CD8-positive, alpha-beta T cell (primary cell): ENCODE measurements at regions of chr5 and their contacts with region 1.

Region 1: GRCh38 chr5:180860887-180861822 is at the start of gene ZFP62:
- DNase-seq: peak; percentile 81 to 94 (median 86)
- ATAC-seq: peak; percentile 71
- H3K4me3 ChIP-seq: peak within 1 kb of the TSS; percentile 79 to 86
- H3K4me3 Mint-ChIP-seq: peak within 1 kb of the TSS; percentile 94
- H3K27ac ChIP-seq: peak within 1 kb of the TSS; percentile 65 to 85
- H3K27ac Mint-ChIP-seq: peak within 1 kb of the TSS; percentile 96
- H3K4me1 ChIP-seq: no peaks in the 10 kb centered on the region
- H3K4me1 Mint-ChIP-seq: peaks cover 29% of the 10 kb centered on the region
- H3K27me3 ChIP-seq: no peaks in the 10 kb centered on the region
- H3K27me3 Mint-ChIP-seq: no peaks in the 10 kb centered on the region
- CTCF ChIP-seq: peak; percentile 8
- total RNA-seq, gene ZFP62: 13.7 to 13.9 TPM

Region 2: GRCh38 chr5:180259260-180259681 is 601.9 kb before region 1 on chr5:
- CTCF ChIA-PET with region 1: no interaction called
- POLR2A ChIA-PET with region 1: no interaction called
- intact Hi-C with region 1: no loop called
- DNase-seq: no peak
- ATAC-seq: no peak
- H3K4me3 ChIP-seq: no peak overlapping the region
- H3K4me3 Mint-ChIP-seq: no peak overlapping the region
- H3K27ac ChIP-seq: no peak overlapping the region
- H3K27ac Mint-ChIP-seq: no peak overlapping the region
- H3K4me1 ChIP-seq: no peaks in the 10 kb centered on the region
- H3K4me1 Mint-ChIP-seq: no peaks in the 10 kb centered on the region
- H3K27me3 ChIP-seq: no peaks in the 10 kb centered on the region
- H3K27me3 Mint-ChIP-seq: no peaks in the 10 kb centered on the region
- CTCF ChIP-seq: no peak

Region 3: DNA sequence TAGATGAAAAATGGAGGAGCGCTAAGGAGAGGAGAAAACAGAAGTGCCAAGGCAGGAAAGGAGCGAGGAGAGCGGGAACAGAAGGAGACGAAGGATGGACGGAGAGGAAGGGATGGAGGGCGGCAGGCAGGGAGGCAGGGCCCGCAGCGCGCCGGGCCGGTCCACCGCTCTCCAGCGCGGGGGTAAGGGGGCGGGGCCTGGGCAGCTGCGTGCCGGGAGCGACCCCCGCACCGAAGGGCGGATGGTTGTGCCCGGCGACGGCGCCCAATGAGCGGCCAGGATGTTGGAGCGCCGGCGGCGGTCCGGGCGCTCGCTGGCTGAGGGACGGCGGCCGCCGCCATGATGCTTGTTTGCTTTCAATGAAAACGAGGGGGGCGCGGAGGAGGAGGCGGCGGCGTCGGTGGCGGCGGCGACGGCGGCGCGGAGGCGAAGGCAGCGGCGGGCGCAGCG is 367.1 kb before region 1 on chr5 and contains the start of gene CNOT6:
- CTCF ChIA-PET with region 1: no interaction called
- POLR2A ChIA-PET with region 1: no interaction called
- intact Hi-C with region 1: loop called (anchors 5 to 10 kb)
- DNase-seq: peak; percentile 90 to 98 (median 95)
- ATAC-seq: peak; percentile 91
- H3K4me3 ChIP-seq: peak within 1 kb of the TSS; percentile 64
- H3K4me3 Mint-ChIP-seq: peak within 1 kb of the TSS; percentile 98
- H3K27ac ChIP-seq: peak within 1 kb of the TSS; percentile 80 to 88
- H3K27ac Mint-ChIP-seq: peak within 1 kb of the TSS; percentile 99
- H3K4me1 ChIP-seq: peaks cover 16% of the 10 kb centered on the region
- H3K4me1 Mint-ChIP-seq: peaks cover 40% of the 10 kb centered on the region
- H3K27me3 ChIP-seq: no peaks in the 10 kb centered on the region
- H3K27me3 Mint-ChIP-seq: no peaks in the 10 kb centered on the region
- CTCF ChIP-seq: no peak
- total RNA-seq, gene CNOT6: 13.1 to 13.9 TPM

Region 4: DNA sequence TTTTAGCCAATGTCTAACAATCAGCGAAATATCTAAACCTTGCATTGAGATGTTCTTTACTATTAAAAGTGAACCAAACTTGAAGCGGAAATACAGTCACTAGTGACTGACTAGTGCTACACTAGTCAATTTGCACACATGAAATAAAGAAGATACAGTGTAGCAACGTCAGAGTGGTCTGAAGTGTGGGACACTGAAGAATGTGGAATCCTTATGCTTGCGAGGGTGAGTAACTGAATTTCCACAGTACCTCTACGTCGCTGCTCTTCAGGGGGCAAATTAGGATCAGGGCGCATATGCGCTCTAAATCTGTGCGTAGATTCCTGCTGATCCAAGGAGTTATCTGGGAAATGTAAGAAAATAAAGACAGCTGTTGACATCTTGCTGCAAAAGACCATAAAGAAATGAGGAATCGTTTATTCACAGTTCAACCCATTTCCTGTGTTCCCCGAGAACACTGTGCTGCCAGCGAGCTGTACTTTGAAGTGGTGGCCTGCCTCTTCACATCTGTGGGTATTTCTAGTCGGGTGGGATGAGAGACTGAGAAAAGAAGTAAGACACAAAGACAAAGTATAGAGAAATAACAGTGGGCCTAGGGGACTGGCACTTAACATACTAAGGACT is 172.0 kb before region 1 on chr5:
- CTCF ChIA-PET with region 1: no interaction called
- POLR2A ChIA-PET with region 1: no interaction called
- intact Hi-C with region 1: no loop called
- DNase-seq: peak in 8 of 9 experiments; percentile 32 to 84 (median 64)
- ATAC-seq: peak; percentile 70
- H3K4me3 ChIP-seq: peak overlapping the region; percentile 24 to 39
- H3K4me3 Mint-ChIP-seq: peak overlapping the region; percentile 78
- H3K27ac ChIP-seq: peak overlapping the region; percentile 36 to 68
- H3K27ac Mint-ChIP-seq: peak overlapping the region; percentile 95
- H3K4me1 ChIP-seq: peaks cover 85% of the 10 kb centered on the region
- H3K4me1 Mint-ChIP-seq: peaks cover 85% of the 10 kb centered on the region
- H3K27me3 ChIP-seq: no peaks in the 10 kb centered on the region
- H3K27me3 Mint-ChIP-seq: no peaks in the 10 kb centered on the region
- CTCF ChIP-seq: no peak

Region 5: DNA sequence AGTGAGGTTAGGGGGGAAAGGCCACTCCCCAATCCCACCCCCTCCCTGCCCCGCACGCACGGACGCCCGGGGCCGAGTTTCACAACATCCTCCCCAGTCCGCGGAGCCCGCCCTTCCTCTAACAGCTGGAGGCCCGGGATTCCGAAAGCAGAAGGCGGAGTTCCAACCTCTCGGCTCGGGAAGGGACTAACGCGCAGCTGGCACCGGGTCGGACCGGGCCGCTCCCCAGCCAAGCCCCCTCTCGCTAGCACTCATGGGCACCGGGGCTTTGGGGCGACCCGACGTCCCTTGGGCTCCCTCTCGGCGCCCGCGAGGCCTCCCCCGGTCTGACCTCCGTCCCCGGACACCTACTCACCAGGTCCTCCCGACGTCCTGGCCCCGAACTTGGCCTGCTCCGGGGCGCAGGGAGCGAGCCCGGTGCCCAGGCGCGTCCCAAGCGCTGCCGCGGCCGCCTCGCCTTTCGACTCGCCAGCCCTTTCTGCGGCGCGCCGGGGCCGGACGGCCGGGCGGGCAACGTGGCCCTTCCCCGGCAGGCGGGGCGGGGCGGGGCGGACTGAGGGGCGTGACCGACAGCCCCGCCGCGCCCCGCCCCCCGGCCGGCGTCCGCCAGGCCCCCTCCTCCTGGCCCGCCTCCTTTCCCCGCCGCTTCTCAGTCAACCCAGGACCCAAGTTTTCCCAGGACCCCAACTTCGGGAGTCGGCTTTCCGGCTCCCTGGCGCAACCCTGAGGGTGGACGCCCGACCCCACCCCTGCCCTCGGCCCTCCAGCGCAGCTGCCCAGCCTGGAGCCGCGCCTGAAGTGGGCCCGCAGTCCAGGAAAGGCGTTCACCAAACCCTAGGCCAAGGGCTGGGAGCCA is 58.6 kb before region 1 on chr5 and contains the start of gene MGAT1:
- CTCF ChIA-PET with region 1: interaction called, 9 read pairs
- POLR2A ChIA-PET with region 1: interaction called, 23 read pairs
- intact Hi-C with region 1: loop called (anchors 1 kb)
- DNase-seq: peak; percentile 39 to 87 (median 80)
- ATAC-seq: peak; percentile 60
- H3K4me3 ChIP-seq: peak within 1 kb of the TSS; percentile 90 to 92
- H3K4me3 Mint-ChIP-seq: peak within 1 kb of the TSS; percentile 87
- H3K27ac ChIP-seq: peak within 1 kb of the TSS; percentile 63 to 87
- H3K27ac Mint-ChIP-seq: peak within 1 kb of the TSS; percentile 100
- H3K4me1 ChIP-seq: peaks cover 80% of the 10 kb centered on the region
- H3K4me1 Mint-ChIP-seq: peaks cover 84% of the 10 kb centered on the region
- H3K27me3 ChIP-seq: no peaks in the 10 kb centered on the region
- H3K27me3 Mint-ChIP-seq: no peaks in the 10 kb centered on the region
- CTCF ChIP-seq: no peak
- total RNA-seq, gene MGAT1: 43.5 to 47.5 TPM

Region 6: DNA sequence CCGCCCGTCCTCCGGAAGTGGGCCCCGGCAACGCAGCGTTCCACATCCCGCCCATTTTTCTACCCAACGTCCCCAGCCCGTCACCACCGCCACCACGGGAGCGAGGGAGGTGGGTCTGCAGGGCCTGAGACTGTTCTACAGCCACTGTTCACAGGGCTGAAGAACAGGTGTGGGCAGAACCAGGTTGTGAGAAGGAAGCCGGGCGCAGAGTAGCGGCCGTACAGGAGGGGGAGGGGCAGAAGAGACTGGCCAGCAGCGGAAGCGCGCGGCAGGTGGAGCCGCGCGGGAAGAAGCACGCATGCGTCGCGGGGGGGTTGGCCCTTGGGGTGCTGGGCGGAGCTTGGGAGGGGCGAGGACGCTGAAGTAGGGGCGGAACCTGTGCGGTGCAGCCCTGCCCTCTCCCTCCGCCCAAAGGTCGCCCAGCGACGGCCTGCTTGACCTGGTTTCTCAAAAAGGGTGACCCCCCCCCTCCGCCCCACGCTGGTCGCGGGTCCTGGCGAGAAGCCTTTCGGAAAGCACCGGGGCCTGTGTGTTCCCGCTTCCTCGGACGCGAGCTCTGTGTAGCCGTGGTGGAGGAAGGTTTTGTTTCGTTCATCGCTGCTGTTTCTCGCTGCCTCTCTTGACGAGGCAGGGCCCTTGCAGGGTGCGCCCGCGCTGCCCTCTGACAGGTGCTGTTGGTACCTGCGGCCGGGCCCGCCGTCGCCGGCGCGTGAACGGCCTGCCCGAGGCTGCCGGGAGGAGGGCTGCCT is 50.8 kb before region 1 on chr5:
- CTCF ChIA-PET with region 1: interaction called, 3 read pairs
- POLR2A ChIA-PET with region 1: interaction called, 9 read pairs
- intact Hi-C with region 1: loop called (anchors 1 kb)
- DNase-seq: peak; percentile 91 to 99 (median 97)
- ATAC-seq: peak; percentile 79
- H3K4me3 ChIP-seq: peak overlapping the region; percentile 66 to 96
- H3K4me3 Mint-ChIP-seq: peak overlapping the region; percentile 84
- H3K27ac ChIP-seq: peak overlapping the region; percentile 94 to 98
- H3K27ac Mint-ChIP-seq: peak overlapping the region; percentile 100
- H3K4me1 ChIP-seq: peaks cover 50% of the 10 kb centered on the region
- H3K4me1 Mint-ChIP-seq: peaks cover 72% of the 10 kb centered on the region
- H3K27me3 ChIP-seq: no peaks in the 10 kb centered on the region
- H3K27me3 Mint-ChIP-seq: no peaks in the 10 kb centered on the region
- CTCF ChIP-seq: no peak

Region 7: GRCh38 chr5:181005791-181006190 is 144.6 kb after region 1 on chr5:
- CTCF ChIA-PET with region 1: no interaction called
- POLR2A ChIA-PET with region 1: no interaction called
- intact Hi-C with region 1: no loop called
- DNase-seq: no peak
- ATAC-seq: no peak
- H3K4me3 ChIP-seq: no peak overlapping the region
- H3K4me3 Mint-ChIP-seq: no peak overlapping the region
- H3K27ac ChIP-seq: no peak overlapping the region
- H3K27ac Mint-ChIP-seq: no peak overlapping the region
- H3K4me1 ChIP-seq: no peaks in the 10 kb centered on the region
- H3K4me1 Mint-ChIP-seq: no peaks in the 10 kb centered on the region
- H3K27me3 ChIP-seq: no peaks in the 10 kb centered on the region
- H3K27me3 Mint-ChIP-seq: peaks cover 17% of the 10 kb centered on the region
- CTCF ChIP-seq: no peak

Region 8: DNA sequence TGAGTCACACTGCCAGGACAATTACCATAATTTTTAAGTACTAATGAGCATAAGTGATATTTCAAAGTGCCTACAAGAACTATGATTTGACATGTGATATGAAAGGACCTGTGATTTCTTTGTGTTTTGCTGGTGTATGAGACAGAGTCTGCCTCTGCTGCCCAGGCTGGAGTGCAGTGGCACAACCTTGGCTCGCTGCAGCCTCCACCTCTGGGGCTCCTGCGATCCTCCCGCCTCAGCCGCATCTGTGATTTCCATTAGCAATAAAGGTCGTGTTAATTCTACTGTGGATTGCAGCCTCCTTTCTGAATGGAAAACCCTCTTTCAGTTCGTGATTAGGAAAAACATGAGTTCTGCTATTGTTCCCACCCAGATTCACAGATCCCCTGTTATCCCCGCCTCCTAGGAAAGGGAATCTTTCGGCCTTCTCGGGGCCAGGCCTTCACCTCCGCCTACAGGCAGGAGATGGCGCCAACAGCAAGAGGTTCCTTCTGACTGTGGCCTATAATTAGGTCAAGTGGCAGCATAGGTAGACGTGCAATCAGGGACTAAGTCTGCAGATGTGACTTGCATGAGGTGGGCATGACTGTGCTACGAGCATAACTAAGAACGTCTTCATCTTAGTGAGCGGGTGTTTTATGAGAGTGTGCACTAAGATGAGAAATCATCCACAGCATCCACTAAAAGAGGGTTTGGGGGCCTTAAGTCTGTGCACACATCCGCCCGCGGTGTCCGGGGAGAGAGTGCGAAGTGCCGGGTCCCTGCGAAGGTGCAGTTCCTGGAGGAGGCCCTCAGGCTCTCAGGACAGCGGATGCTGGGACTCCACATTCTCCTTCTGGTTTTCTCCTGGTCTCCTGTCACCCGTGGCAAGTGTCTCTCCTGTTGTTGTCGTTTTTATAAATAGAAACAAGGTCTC is 320.8 kb after region 1 on chr5:
- CTCF ChIA-PET with region 1: no interaction called
- POLR2A ChIA-PET with region 1: interaction called, 3 read pairs
- intact Hi-C with region 1: loop called in 1 of 2 experiments (anchors 10 kb)
- DNase-seq: peak in 8 of 9 experiments; percentile 49 to 88 (median 73)
- ATAC-seq: peak; percentile 77
- H3K4me3 ChIP-seq: no peak overlapping the region
- H3K4me3 Mint-ChIP-seq: peak overlapping the region; percentile 83
- H3K27ac ChIP-seq: peak overlapping the region in 1 of 2 experiments; percentile 55
- H3K27ac Mint-ChIP-seq: peak overlapping the region; percentile 76
- H3K4me1 ChIP-seq: peaks cover 13% of the 10 kb centered on the region
- H3K4me1 Mint-ChIP-seq: peaks cover 31% of the 10 kb centered on the region
- H3K27me3 ChIP-seq: no peaks in the 10 kb centered on the region
- H3K27me3 Mint-ChIP-seq: peaks cover 2% of the 10 kb centered on the region
- CTCF ChIP-seq: peak; percentile 79